CD4-positive, alpha-beta memory T cell (primary cell): ENCODE measurements at regions of chr6 and their contacts with region 1.

Region 1: GRCh38 chr6:87078983-87079616 is 15.8 kb downstream of the CGA start:
- DNase-seq: peak; percentile 11 to 41 (median 35)
- H3K4me3 ChIP-seq: no peak overlapping the region
- H3K4me3 Mint-ChIP-seq: no peak overlapping the region
- H3K27ac ChIP-seq: no peak overlapping the region
- H3K27ac Mint-ChIP-seq: no peak overlapping the region
- H3K4me1 ChIP-seq: no peaks in the 10 kb centered on the region
- H3K4me1 Mint-ChIP-seq: peaks cover 0 to 1% (median 0%) of the 10 kb centered on the region in 4 donors
- H3K27me3 ChIP-seq: peaks cover 6% of the 10 kb centered on the region
- H3K27me3 Mint-ChIP-seq: peaks cover 9 to 14% of the 10 kb centered on the region in 2 donors

Region 2: DNA sequence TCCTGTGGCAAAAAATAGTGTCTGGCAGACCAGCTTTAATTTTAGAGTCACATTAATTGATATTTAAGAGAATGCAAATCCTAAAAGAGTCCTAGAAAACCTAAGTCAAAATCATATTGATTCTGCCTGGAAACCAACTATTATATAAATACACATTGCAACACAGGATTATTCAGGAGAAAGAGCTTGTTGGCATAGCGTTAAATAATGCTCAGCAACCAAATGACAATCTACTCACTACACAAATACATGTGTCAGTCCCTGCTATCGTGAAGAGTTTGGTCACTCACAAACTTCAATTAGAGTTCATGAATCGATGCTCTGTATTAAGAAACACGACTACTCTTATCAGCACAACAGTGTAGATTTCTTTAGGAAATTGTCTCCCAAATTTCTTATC is 38.4 kb before region 1 on chr6:
- CTCF ChIA-PET with region 1: interaction called, 10 read pairs
- POLR2A ChIA-PET with region 1: no interaction called
- intact Hi-C with region 1: no loop called
- DNase-seq: no peak
- H3K4me3 ChIP-seq: no peak overlapping the region
- H3K4me3 Mint-ChIP-seq: no peak overlapping the region
- H3K27ac ChIP-seq: no peak overlapping the region
- H3K27ac Mint-ChIP-seq: no peak overlapping the region
- H3K4me1 ChIP-seq: no peaks in the 10 kb centered on the region
- H3K4me1 Mint-ChIP-seq: no peaks in the 10 kb centered on the region
- H3K27me3 ChIP-seq: no peaks in the 10 kb centered on the region
- H3K27me3 Mint-ChIP-seq: peaks cover 12 to 14% of the 10 kb centered on the region in 2 donors

Region 3: DNA sequence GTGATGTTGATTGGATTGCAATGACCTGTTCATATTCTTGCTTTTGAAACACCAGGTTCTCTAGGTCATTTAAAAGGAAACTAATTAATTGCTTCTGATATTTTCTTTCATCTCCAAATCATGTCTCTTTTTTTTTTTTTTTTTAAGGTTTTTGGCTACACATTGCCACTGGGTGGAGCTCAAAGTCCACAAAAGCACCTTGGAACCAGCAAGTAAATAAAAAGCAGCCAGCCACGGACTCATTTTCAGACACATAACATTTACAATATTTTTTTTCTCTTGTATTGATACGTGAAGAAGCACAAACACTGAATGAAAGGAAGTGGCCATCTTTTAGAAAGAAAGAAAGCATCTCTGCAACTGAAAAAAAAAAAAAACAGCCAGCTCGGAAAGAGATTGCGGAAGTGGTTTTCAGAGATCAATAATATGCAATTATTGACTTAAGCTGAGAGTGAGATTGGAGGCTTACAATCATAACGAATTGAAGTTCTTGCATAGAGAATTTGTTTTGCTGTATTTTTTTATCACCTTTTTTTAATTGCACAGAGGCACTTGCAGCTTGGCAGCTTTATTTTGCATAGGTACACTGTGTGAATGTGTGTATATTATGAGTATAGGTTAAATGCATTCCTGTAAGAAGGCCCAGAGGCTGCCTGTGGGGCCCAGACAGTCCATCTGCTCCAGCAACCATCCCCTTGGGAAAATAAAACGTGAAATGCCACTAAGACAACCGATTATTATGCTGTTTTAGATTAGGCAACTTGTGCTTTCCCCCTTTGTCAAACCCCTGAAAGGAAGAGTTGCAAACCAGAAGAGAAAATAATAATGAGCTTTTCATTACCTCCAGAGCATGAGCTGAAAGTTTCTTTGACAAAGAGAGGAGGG is 12.4 kb before region 1 on chr6:
- CTCF ChIA-PET with region 1: interaction called, 59 read pairs
- POLR2A ChIA-PET with region 1: interaction called, 3 read pairs
- intact Hi-C with region 1: no loop called
- DNase-seq: peak in 4 of 5 donors; percentile 24 to 40 (median 34)
- H3K4me3 ChIP-seq: no peak overlapping the region
- H3K4me3 Mint-ChIP-seq: peak overlapping the region in 4 of 8 donors; percentile 19 to 51 (median 44)
- H3K27ac ChIP-seq: no peak overlapping the region
- H3K27ac Mint-ChIP-seq: peak overlapping the region in 2 of 7 donors; percentile 26 to 43
- H3K4me1 ChIP-seq: no peaks in the 10 kb centered on the region
- H3K4me1 Mint-ChIP-seq: no peaks in the 10 kb centered on the region
- H3K27me3 ChIP-seq: no peaks in the 10 kb centered on the region
- H3K27me3 Mint-ChIP-seq: peaks cover 1 to 12% of the 10 kb centered on the region in 2 donors

Region 4: DNA sequence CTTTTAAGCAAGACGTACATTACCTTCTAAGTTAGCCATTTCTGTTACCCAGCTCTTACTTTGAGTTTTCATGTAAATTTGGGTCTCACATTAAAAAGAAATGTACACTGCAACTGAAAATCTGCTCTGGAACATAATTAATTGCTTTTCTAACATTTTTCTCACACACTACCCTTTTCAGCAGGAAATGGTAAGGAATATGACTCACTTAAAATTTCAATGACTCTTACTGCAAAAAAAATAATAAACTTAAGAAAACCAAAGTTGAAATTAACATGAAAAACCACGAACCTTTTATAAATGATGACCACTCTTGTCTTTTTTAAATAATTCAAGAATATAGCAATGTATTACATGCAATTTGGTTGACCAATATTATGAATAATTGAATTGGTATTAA is 14.6 kb after region 1 on chr6:
- CTCF ChIA-PET with region 1: interaction called, 15 read pairs
- POLR2A ChIA-PET with region 1: no interaction called
- intact Hi-C with region 1: no loop called
- DNase-seq: no peak
- H3K4me3 ChIP-seq: no peak overlapping the region
- H3K4me3 Mint-ChIP-seq: no peak overlapping the region
- H3K27ac ChIP-seq: no peak overlapping the region
- H3K27ac Mint-ChIP-seq: no peak overlapping the region
- H3K4me1 ChIP-seq: no peaks in the 10 kb centered on the region
- H3K4me1 Mint-ChIP-seq: peaks cover 0 to 2% (median 0%) of the 10 kb centered on the region in 4 donors
- H3K27me3 ChIP-seq: no peaks in the 10 kb centered on the region
- H3K27me3 Mint-ChIP-seq: peaks cover 9 to 10% of the 10 kb centered on the region in 2 donors

Region 5: DNA sequence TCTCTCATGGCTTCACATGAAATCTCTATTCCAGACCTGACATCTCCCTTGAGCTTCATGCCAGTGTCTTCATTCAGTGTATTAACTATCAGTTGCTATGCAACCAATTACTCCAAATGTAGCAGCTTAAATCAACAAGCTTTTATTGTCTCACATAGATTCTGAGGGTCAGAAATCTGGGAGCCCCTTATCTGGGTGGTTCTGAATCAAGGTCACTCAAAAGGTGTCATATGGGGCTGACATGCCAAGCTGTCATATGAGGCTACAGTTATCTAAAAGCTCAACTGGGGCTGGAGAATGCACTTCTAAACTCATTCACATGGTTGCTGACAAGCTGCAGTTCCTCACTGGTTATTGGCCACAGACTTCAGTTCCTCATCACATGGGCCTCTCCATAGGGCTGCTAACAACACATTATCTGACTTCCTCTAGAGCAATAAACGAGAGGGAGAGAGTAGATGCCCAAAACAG is 23.1 kb after region 1 on chr6:
- CTCF ChIA-PET with region 1: interaction called, 16 read pairs
- POLR2A ChIA-PET with region 1: no interaction called
- intact Hi-C with region 1: no loop called
- DNase-seq: no peak
- H3K4me3 ChIP-seq: no peak overlapping the region
- H3K4me3 Mint-ChIP-seq: no peak overlapping the region
- H3K27ac ChIP-seq: no peak overlapping the region
- H3K27ac Mint-ChIP-seq: no peak overlapping the region
- H3K4me1 ChIP-seq: no peaks in the 10 kb centered on the region
- H3K4me1 Mint-ChIP-seq: no peaks in the 10 kb centered on the region
- H3K27me3 ChIP-seq: no peaks in the 10 kb centered on the region
- H3K27me3 Mint-ChIP-seq: peaks cover 0 to 3% of the 10 kb centered on the region in 2 donors